ENCODE measurements at regions of chr1 and their contacts with region 1.

Region 1: GRCh38 chr1:156456622-156457465 is 43.7 kb downstream of the MEF2D start:
- DNase-seq: peak; percentile 95 to 96
- H3K4me3 ChIP-seq: peak overlapping the region; percentile 66
- H3K27ac ChIP-seq: peak overlapping the region; percentile 89
- H3K4me1 ChIP-seq: peaks cover 13% of the 10 kb centered on the region
- H3K27me3 ChIP-seq: no peaks in the 10 kb centered on the region
- CTCF ChIP-seq: no peak

Region 2: GRCh38 chr1:156401681-156402081 is 55.2 kb before region 1 on chr1:
- CTCF ChIA-PET with region 1: no interaction called
- POLR2A ChIA-PET with region 1: no interaction called
- intact Hi-C with region 1: no loop called
- DNase-seq: no peak
- H3K4me3 ChIP-seq: no peak overlapping the region
- H3K27ac ChIP-seq: no peak overlapping the region
- H3K4me1 ChIP-seq: peaks cover 15% of the 10 kb centered on the region; the same call in 1 of the 2 replicates
- H3K27me3 ChIP-seq: no peaks in the 10 kb centered on the region
- CTCF ChIP-seq: no peak

Region 3: DNA sequence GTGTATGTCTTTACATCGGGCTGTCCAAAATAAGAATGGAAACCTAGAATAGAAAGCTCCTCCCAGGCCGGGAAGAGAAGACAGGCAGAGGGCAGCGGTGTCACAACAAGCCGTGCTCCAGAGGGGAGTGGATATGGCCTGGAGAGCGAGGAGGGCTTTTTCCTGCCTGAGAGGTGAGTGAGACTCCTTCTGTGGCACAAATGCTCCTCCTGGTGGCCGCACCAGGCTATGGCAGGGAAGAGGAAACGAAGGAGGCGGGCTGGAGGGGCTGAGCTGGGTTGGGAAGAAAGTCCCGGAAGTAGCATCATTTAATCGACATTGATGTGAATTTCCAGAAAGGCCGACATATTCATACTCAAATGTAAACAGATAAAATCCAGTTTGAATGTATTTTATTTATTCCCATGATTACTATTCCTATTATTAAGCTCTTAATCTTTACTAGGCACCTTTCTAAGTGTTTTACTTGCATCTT is 11.0 kb before region 1 on chr1:
- CTCF ChIA-PET with region 1: interaction called, 17 read pairs
- POLR2A ChIA-PET with region 1: no interaction called
- intact Hi-C with region 1: no loop called
- DNase-seq: peak; percentile 68 to 88
- H3K4me3 ChIP-seq: no peak overlapping the region
- H3K27ac ChIP-seq: no peak overlapping the region
- H3K4me1 ChIP-seq: no peaks in the 10 kb centered on the region
- H3K27me3 ChIP-seq: peaks cover 8% of the 10 kb centered on the region
- CTCF ChIP-seq: peak; percentile 98

Region 4: DNA sequence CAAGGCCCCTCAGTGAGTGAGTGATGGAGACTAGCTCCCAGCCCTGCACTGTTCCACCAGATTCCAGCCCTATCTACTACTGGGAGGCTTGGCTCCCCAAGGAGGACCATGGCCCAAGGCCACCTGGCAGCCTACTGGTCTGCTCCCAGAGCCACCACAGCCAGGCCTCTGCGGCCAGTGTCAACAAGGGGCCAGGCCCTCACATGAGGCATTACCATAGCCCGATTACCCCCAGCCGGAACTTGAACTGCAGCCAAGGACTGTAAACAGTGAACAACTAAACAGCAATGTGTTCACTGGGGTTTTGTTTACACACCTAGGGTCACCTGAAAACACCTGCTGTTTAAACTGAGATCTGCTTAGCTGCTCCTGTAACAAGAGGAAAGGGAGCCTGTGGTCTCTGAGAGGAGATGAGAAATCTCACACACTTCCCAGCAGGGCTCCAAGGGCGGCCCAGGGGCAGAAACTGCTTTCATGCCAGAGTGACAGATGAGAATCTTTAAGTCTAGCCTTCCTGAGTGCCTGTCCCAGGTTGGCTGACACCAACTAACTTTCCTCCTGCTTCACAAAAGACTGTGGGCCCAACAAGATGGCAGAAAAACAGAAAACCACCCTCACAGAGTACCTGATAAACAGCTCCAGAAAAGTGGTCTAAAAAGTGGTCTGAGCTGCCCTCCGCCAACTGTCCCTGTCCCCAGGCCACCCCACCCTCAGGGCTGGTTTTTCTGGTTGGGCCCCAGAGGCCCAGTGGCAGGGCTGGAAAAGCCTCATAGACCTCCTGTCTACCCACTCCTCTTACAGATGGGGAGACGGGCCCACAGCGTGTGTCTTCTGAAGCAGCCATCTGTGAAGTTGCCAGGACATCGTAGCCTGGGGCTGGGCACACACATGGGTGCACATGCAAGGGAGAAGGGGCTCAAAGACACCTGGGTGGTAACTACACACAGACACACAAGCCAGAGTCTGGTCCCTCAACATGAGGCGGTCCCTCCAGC is 14.9 kb after region 1 on chr1:
- CTCF ChIA-PET with region 1: no interaction called
- POLR2A ChIA-PET with region 1: interaction called, 11 read pairs
- intact Hi-C with region 1: loop called (anchors 2 kb)
- DNase-seq: peak; percentile 90 to 100
- H3K4me3 ChIP-seq: peak overlapping the region; percentile 22; the same call in 1 of the 2 replicates
- H3K27ac ChIP-seq: peak overlapping the region; percentile 87
- H3K4me1 ChIP-seq: peaks cover 48% of the 10 kb centered on the region
- H3K27me3 ChIP-seq: no peaks in the 10 kb centered on the region
- CTCF ChIP-seq: no peak

Region 5: GRCh38 chr1:156489166-156489934 is 32.5 kb after region 1 on chr1:
- CTCF ChIA-PET with region 1: no interaction called
- POLR2A ChIA-PET with region 1: interaction called, 10 read pairs
- intact Hi-C with region 1: no loop called
- DNase-seq: no peak
- H3K4me3 ChIP-seq: no peak overlapping the region
- H3K27ac ChIP-seq: peak overlapping the region; percentile 16
- H3K4me1 ChIP-seq: peaks cover 42% of the 10 kb centered on the region
- H3K27me3 ChIP-seq: no peaks in the 10 kb centered on the region
- CTCF ChIP-seq: no peak

Region 6: DNA sequence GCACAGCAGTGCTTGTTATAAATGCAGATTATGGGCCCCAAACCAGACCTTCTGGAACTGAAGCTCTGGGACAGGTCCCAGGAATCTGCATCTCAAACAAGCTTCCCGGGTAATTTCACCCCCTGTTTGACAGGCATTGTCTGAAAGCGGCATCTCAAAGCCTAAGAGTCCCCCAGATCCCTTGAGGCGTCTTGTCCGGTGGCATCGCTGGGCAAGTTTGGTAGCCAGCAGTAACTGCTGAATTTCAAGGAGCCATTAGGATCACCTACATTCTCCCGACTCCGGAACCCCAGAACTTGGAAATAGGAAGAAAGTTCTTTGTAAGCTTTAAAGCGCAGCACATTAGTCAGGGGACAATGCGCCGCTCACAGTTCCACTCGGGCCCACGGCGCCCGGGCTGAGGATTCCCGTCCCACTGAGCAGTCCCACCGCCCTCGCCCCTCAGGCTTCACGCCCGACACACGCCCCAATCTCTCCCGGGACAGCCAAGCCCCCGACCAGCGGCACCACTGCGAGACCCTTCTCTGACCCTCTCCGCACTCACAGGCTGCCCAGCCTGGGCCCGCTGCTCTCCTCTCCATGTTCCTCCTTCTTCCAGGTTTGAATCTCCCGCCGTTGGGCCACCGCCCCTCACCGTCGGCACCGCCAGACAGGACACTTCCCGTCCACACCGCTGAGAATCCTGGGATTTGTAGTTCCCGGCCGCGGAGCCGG is 115.3 kb after region 1 on chr1 and contains the start of gene IQGAP3:
- CTCF ChIA-PET with region 1: no interaction called
- POLR2A ChIA-PET with region 1: no interaction called
- intact Hi-C with region 1: loop called (anchors 1 kb)
- DNase-seq: peak; percentile 79 to 85
- H3K4me3 ChIP-seq: peak within 1 kb of the TSS; percentile 77
- H3K27ac ChIP-seq: peak within 1 kb of the TSS; percentile 76
- H3K4me1 ChIP-seq: peaks cover 14% of the 10 kb centered on the region
- H3K27me3 ChIP-seq: no peaks in the 10 kb centered on the region
- CTCF ChIP-seq: no peak
- total RNA-seq, gene IQGAP3: 63.1 and 63.4 TPM in 2 replicates

Region 7: DNA sequence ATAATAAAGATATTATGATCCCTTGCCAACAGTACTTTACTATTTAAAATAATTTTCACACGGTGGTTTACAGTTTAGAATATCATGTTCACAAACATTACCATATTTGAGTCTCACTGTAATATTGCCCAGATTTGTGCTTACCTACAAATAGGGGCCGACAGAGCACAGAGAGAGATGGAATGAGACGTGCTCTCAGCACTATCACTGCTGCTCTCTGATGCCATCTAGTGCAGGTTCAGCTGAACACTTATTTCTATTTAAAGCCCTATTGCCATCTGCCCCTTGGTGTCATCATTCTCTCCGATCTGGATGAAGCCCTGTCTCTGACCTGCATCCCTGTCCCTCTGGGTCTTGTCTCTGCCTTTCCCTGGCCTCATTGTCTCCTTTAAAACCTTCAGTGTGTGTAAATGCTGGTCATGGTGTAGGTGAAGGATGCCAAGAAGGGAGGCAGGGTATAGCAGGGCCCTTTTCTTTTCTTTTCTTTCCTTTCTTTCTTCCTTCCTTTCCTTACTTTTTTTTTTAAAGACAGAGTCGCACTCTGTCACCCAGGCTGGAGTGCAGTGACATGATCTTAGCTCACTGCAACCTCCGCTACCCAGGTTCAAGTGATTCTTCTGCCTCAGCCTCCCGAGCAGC is 151.3 kb after region 1 on chr1:
- CTCF ChIA-PET with region 1: interaction called, 4 read pairs
- POLR2A ChIA-PET with region 1: no interaction called
- intact Hi-C with region 1: loop called (anchors 1 kb)
- DNase-seq: peak; percentile 43 to 62
- H3K4me3 ChIP-seq: no peak overlapping the region; the same call in 1 of the 2 replicates
- H3K27ac ChIP-seq: no peak overlapping the region
- H3K4me1 ChIP-seq: peaks cover 18% of the 10 kb centered on the region; the same call in 1 of the 2 replicates
- H3K27me3 ChIP-seq: peaks cover 16% of the 10 kb centered on the region; the same call in 1 of the 2 replicates
- CTCF ChIP-seq: peak; percentile 84

Region 8: DNA sequence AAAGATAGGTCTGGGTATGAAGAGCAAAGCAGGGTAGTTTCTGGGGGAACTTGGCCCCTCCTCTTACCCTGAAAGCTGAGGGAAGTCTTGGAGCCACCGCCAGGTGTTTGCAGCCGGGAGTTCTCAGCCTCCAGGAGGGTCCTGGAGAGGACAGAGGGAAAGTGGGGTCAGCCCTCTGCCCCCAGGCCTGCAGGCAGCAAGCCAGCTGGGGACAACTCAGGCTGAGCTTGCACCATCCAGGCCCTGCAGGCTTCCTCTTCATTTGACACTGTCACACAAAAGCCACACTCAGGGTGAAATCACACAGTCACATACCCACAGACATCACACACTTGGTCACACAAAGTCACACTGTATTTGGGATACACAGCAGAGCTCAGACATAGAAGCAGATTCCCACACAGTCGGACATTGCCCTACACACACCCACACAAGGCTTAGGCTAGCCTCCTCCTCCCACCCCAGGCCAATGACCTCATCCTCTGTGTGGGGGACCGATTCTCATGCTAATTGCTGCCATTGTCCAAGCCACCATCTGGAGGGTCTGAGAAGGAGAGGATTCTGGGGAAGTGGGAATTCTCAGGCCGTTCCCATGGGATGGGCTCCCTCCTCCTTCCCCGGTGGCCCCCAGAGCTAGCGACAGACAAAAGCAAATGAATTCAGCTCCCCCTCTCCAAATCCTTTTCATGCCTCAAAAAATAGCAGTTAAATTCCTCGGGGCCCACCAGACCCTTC is 216.7 kb after region 1 on chr1:
- CTCF ChIA-PET with region 1: no interaction called
- POLR2A ChIA-PET with region 1: no interaction called
- intact Hi-C with region 1: no loop called
- DNase-seq: no peak
- H3K4me3 ChIP-seq: no peak overlapping the region
- H3K27ac ChIP-seq: no peak overlapping the region
- H3K4me1 ChIP-seq: peaks cover 9% of the 10 kb centered on the region
- H3K27me3 ChIP-seq: peaks cover 30% of the 10 kb centered on the region; the same call in 1 of the 2 replicates
- CTCF ChIP-seq: no peak

Measured in PC-9 (cell line).